ENCODE measurements at regions of chr9 and their contacts with region 1.

Region 1: GRCh38 chr9:5459289-5459829 is 9.0 kb downstream of the CD274 start:
- DNase-seq: no peak
- H3K4me3 Mint-ChIP-seq: peak overlapping the region; percentile 76
- H3K27ac Mint-ChIP-seq: peak overlapping the region; percentile 88
- H3K4me1 Mint-ChIP-seq: peaks cover 70% of the 10 kb centered on the region
- H3K27me3 Mint-ChIP-seq: no peaks in the 10 kb centered on the region

Region 2: GRCh38 chr9:4939118-4939561 is 520.2 kb before region 1 on chr9:
- intact Hi-C with region 1: loop called (anchors 2 kb)
- DNase-seq: peak; percentile 33
- H3K4me3 Mint-ChIP-seq: peak overlapping the region; percentile 5
- H3K27ac Mint-ChIP-seq: peak overlapping the region; percentile 74
- H3K4me1 Mint-ChIP-seq: peaks cover 75% of the 10 kb centered on the region
- H3K27me3 Mint-ChIP-seq: no peaks in the 10 kb centered on the region

Region 3: GRCh38 chr9:5375091-5375490 is 84.3 kb before region 1 on chr9:
- intact Hi-C with region 1: loop called (anchors 1 kb)
- DNase-seq: no peak
- H3K4me3 Mint-ChIP-seq: peak overlapping the region; percentile 23
- H3K27ac Mint-ChIP-seq: peak overlapping the region; percentile 81
- H3K4me1 Mint-ChIP-seq: peaks cover 32% of the 10 kb centered on the region
- H3K27me3 Mint-ChIP-seq: no peaks in the 10 kb centered on the region

Region 4: GRCh38 chr9:5388026-5388819 is 71.1 kb before region 1 on chr9:
- intact Hi-C with region 1: no loop called
- DNase-seq: no peak
- H3K4me3 Mint-ChIP-seq: no peak overlapping the region
- H3K27ac Mint-ChIP-seq: no peak overlapping the region
- H3K4me1 Mint-ChIP-seq: peaks cover 25% of the 10 kb centered on the region
- H3K27me3 Mint-ChIP-seq: no peaks in the 10 kb centered on the region

Region 5: DNA sequence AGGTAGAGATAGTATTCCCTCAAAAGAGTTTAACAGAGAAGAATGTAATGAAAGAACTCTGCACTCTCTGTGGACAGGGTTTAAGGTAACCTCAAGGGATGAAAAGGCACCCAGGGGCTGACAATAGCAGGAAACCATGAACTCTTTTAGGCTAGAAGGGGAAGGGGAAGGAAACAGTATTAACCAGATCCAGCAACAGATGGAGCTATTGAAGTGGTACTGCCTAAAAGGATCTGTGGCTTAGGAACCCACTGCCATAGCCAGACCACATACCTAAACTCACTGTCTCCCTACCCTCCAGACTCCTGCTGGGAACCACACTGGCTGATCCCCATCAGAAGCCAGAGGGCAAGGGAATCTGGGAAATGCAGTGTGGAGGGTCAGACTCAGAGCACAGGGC is 57.1 kb before region 1 on chr9:
- intact Hi-C with region 1: no loop called
- DNase-seq: no peak
- H3K4me3 Mint-ChIP-seq: no peak overlapping the region
- H3K27ac Mint-ChIP-seq: no peak overlapping the region
- H3K4me1 Mint-ChIP-seq: peaks cover 21% of the 10 kb centered on the region
- H3K27me3 Mint-ChIP-seq: no peaks in the 10 kb centered on the region

Region 6: GRCh38 chr9:5510360-5510931 is 51.1 kb after region 1 on chr9 and contains the start of gene PDCD1LG2:
- intact Hi-C with region 1: loop called (anchors 1 kb)
- DNase-seq: peak; percentile 41
- H3K4me3 Mint-ChIP-seq: peak within 1 kb of the TSS; percentile 82
- H3K27ac Mint-ChIP-seq: peak within 1 kb of the TSS; percentile 96
- H3K4me1 Mint-ChIP-seq: peaks cover 68% of the 10 kb centered on the region
- H3K27me3 Mint-ChIP-seq: no peaks in the 10 kb centered on the region
- total RNA-seq, gene PDCD1LG2: 1.1 and 1.4 TPM in 2 replicates

Region 7: DNA sequence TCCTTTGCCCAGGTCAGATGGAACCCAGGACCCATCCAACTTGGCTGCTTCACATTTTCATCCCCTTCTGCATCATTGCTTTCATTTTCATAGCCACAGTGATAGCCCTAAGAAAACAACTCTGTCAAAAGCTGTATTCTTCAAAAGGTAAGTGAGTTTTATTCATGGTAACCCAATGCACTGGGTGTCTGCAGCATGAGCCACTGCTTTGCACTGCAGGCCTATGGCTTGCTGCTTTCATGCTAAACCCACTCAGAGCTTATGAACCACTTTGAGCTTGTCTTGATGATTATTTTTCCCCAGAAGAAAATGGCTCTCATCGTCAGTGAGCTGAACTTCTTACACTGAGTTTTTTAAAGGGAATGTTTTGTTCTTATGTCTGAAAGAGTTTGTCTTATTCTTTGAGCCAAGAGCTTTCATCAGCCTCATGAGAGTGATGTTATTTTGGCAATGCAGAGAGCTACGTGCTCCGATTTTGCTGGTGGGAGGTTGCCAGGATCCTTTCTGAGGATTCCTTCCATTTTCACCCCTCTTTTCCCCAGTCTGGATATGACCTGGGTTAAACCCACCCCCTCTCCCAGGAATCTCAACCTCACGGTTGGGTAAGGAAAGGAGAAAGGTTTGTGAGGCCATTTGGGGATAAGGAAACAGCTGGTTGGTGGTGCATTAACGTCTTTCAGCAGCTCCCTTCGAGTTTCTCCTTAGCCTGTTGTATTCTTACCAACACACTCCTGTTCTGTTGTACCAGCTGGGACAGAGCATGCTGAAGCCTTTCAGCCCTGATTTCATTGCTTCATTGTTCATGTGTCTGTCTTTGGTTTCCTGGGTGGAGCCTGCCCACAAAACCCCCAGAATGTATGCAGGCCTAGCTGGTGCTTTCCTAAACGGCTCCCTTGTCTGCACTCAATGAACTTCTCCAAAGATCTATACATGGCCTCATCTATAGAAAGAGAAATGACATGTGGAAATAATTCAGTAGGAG is 98.5 kb after region 1 on chr9:
- intact Hi-C with region 1: loop called (anchors 1 kb)
- DNase-seq: peak; percentile 71
- H3K4me3 Mint-ChIP-seq: peak overlapping the region; percentile 65
- H3K27ac Mint-ChIP-seq: peak overlapping the region; percentile 84
- H3K4me1 Mint-ChIP-seq: peaks cover 55% of the 10 kb centered on the region
- H3K27me3 Mint-ChIP-seq: no peaks in the 10 kb centered on the region

Region 8: DNA sequence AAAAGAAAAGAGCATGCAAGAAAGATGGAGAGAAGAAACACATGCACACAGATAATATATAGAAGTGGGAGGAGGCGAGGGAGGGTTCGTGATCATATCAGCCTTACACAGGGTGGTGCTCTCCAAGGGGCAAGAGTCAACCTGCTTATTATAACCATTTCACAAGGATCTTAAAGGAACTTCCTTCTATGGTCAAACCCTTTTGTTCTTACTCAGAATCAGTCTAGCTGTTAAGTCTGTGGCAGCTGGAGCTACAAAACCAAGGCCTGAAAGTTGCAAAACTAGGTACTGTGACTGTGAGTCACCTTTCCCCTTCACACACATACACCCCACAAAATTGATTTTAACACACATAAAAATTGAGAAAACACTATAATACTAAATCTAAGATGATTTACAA is 392.1 kb after region 1 on chr9:
- intact Hi-C with region 1: loop called (anchors 5 kb)
- DNase-seq: peak; percentile 49
- H3K4me3 Mint-ChIP-seq: peak overlapping the region; percentile 28
- H3K27ac Mint-ChIP-seq: peak overlapping the region; percentile 68
- H3K4me1 Mint-ChIP-seq: peaks cover 69% of the 10 kb centered on the region
- H3K27me3 Mint-ChIP-seq: no peaks in the 10 kb centered on the region